ENCODE measurements at regions of chr9 and their contacts with region 1.

Region 1: GRCh38 chr9:33024966-33025571 is at the start of gene DNAJA1:
- DNase-seq: peak; percentile 93
- H3K4me3 Mint-ChIP-seq: peak within 1 kb of the TSS; percentile 95
- H3K27ac Mint-ChIP-seq: peak within 1 kb of the TSS; percentile 94
- H3K4me1 Mint-ChIP-seq: peaks cover 75% of the 10 kb centered on the region
- H3K27me3 Mint-ChIP-seq: no peaks in the 10 kb centered on the region
- total RNA-seq, gene DNAJA1: 110 to 120 TPM

Region 2: DNA sequence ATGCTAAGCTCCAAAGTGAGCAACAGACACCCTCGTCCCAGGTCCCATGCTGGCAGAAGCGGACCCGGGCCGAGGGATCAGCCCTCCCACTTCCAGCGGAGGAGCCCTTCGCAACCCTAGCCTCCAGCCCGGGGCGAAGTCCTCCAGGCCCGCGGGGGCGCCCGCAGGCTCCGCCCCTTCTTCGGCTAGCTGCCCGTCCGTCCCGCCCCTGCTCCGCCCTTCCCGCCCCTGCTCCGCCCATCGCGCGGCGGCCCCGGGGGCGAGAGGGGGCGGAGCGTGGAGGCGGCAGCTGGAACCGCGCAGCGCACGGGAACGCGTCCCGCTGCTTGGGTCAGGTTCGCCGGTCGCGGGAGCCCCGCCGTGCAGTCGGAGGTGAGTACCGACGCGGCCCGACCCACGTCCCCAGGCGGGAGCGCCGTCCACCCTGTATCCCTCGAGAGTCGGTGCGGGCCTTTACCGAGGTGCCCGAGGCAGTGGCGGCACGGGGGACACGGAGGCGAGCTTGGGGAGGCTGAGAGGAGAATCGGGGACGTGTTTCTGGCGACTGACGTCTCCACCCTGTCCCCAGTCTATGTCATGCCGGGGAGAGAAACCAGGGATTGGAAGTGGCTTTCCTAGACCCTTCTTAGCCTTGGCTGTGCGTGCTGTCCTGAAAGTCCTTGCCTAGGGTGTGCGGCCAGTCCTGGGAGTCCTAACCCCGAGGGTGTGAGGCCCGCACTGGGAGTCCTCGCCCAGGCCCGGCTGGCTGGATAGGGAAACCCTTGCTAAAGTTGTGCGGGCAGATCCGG is 640.5 kb before region 1 on chr9 and contains the start of gene ACO1:
- CTCF ChIA-PET with region 1: no interaction called
- intact Hi-C with region 1: loop called (anchors 1 kb)
- DNase-seq: peak; percentile 82
- H3K4me3 Mint-ChIP-seq: peak within 1 kb of the TSS; percentile 79
- H3K27ac Mint-ChIP-seq: no peak within 1 kb of the TSS
- H3K4me1 Mint-ChIP-seq: peaks cover 16% of the 10 kb centered on the region
- H3K27me3 Mint-ChIP-seq: peaks cover 3% of the 10 kb centered on the region
- total RNA-seq, gene ACO1: 13.2 to 14.8 TPM

Region 3: GRCh38 chr9:32463500-32464293 is 561.4 kb before region 1 on chr9:
- CTCF ChIA-PET with region 1: no interaction called
- intact Hi-C with region 1: no loop called
- DNase-seq: no peak
- H3K4me3 Mint-ChIP-seq: no peak overlapping the region
- H3K27ac Mint-ChIP-seq: no peak overlapping the region
- H3K4me1 Mint-ChIP-seq: no peaks in the 10 kb centered on the region
- H3K27me3 Mint-ChIP-seq: no peaks in the 10 kb centered on the region

Region 4: GRCh38 chr9:32571969-32572899 is 452.8 kb before region 1 on chr9:
- CTCF ChIA-PET with region 1: no interaction called
- intact Hi-C with region 1: loop called (anchors 1 kb)
- DNase-seq: peak; percentile 88
- H3K4me3 Mint-ChIP-seq: peak overlapping the region; percentile 88
- H3K27ac Mint-ChIP-seq: peak overlapping the region; percentile 92
- H3K4me1 Mint-ChIP-seq: peaks cover 16% of the 10 kb centered on the region
- H3K27me3 Mint-ChIP-seq: no peaks in the 10 kb centered on the region

Region 5: DNA sequence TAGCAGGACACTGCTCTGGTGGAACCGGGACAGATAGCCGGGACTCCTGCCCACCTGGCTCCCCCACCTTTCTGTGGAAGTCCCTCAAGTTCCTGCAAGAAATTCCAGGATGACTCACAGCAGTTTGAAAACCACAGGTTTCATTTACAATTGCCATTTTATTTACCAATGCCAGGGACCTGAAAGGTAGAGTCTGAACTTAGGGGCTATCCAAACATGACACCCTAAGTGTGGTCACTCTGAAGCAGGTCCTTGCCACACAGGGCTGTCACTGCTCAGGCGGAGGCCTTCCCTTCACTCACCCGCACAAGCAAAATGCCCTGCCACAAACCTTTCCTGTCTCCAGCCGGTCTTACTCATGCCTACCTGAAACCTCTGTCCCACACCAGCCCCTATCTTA is 326.3 kb before region 1 on chr9:
- CTCF ChIA-PET with region 1: no interaction called
- intact Hi-C with region 1: no loop called
- DNase-seq: no peak
- H3K4me3 Mint-ChIP-seq: no peak overlapping the region
- H3K27ac Mint-ChIP-seq: no peak overlapping the region
- H3K4me1 Mint-ChIP-seq: no peaks in the 10 kb centered on the region
- H3K27me3 Mint-ChIP-seq: no peaks in the 10 kb centered on the region

Region 6: GRCh38 chr9:33049680-33050361 is 24.8 kb after region 1 on chr9:
- CTCF ChIA-PET with region 1: no interaction called
- intact Hi-C with region 1: loop called (anchors 1 kb)
- DNase-seq: no peak
- H3K4me3 Mint-ChIP-seq: no peak overlapping the region
- H3K27ac Mint-ChIP-seq: peak overlapping the region; percentile 26
- H3K4me1 Mint-ChIP-seq: peaks cover 15% of the 10 kb centered on the region
- H3K27me3 Mint-ChIP-seq: no peaks in the 10 kb centered on the region

Region 7: GRCh38 chr9:33225319-33226149 is 200.5 kb after region 1 on chr9:
- CTCF ChIA-PET with region 1: no interaction called
- intact Hi-C with region 1: loop called (anchors 1 kb)
- DNase-seq: peak; percentile 89
- H3K4me3 Mint-ChIP-seq: no peak overlapping the region
- H3K27ac Mint-ChIP-seq: peak overlapping the region; percentile 4
- H3K4me1 Mint-ChIP-seq: peaks cover 15% of the 10 kb centered on the region
- H3K27me3 Mint-ChIP-seq: no peaks in the 10 kb centered on the region

Measured in activated naive CD4-positive, alpha-beta T cell treated with anti-CD3 and anti-CD28 coated beads for 36 hours (primary cell).